Left cardiac atrium (tissue), 4 donors: ENCODE measurements at regions of chr2 and their contacts with region 1.

Region 1: DNA sequence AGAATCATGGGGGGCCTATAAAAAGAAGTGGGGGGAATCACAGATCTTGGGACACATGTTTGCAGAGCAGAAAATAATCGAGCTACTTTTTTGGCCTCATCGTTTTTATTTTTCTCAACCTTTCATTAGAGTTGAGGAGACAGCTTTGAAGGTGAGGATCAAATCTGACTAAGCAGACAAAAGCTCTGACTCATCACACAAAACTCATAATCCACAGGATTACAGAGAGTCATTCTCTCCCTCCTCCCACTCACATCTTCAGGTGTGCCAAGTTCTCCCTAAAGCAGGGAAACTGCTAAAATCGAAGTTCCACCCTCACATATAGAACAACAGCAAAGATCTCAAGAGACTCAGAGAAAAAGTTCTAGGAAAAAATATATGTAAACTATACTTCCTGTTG is 15.6 kb downstream of the BAZ2B start:
- DNase-seq: no peak
- ATAC-seq: peak in 1 of 2 donors; percentile 76

Region 2: DNA sequence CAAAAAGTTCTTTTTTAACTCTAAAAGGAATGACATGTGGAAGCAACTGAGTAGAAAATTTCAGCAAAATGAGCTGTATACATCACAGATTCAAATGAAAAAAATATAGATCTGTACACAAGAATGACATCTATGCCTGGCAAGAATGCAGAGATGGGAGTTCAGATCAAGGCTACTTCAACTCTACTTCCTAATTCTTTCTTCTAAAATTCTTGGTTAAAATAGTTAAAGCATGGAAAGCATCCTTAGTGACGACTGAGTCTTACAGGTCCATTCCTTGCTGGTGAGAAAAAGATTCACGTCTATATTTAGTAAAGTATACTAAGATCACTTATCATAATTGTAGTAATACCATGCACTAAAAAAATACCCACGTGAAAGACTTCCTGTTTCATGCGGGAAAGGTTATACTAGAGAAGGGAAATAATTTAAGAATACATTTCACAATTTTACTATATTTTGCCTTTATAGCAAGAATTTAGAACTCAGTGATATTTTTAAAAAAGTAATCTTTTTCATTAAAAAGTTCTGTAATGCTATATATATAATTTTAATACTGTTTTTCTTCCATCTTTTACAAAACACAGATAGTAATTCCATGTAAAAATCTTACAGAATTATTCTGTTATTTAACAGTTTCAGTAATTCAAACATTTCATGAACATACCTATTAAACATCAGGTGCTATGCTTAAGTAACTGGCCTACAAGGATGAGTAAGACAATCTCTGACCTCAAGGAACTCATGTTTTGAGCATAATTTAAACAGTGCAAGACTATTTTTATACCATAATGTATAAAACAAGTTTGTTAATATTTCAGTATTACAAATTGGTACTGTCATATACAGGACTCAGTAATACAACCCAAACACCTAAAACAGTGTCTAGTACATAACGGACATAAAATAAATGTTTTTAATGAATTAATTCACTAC is 144.0 kb before region 1 on chr2:
- intact Hi-C with region 1: loop called in 1 of 2 experiments (anchors 10 kb)
- DNase-seq: no peak
- ATAC-seq: peak in 1 of 2 donors; percentile 44

Region 3: GRCh38 chr2:159921752-159922404 is 321.1 kb after region 1 on chr2:
- intact Hi-C with region 1: no loop called
- DNase-seq: peak; percentile 78
- ATAC-seq: peak; percentile 77 to 91